Activated B cell treated with CpG ODN at 0.5 μM for 24 hours (primary cell): ENCODE measurements at regions of chr13 and their contacts with region 1.

Region 1: DNA sequence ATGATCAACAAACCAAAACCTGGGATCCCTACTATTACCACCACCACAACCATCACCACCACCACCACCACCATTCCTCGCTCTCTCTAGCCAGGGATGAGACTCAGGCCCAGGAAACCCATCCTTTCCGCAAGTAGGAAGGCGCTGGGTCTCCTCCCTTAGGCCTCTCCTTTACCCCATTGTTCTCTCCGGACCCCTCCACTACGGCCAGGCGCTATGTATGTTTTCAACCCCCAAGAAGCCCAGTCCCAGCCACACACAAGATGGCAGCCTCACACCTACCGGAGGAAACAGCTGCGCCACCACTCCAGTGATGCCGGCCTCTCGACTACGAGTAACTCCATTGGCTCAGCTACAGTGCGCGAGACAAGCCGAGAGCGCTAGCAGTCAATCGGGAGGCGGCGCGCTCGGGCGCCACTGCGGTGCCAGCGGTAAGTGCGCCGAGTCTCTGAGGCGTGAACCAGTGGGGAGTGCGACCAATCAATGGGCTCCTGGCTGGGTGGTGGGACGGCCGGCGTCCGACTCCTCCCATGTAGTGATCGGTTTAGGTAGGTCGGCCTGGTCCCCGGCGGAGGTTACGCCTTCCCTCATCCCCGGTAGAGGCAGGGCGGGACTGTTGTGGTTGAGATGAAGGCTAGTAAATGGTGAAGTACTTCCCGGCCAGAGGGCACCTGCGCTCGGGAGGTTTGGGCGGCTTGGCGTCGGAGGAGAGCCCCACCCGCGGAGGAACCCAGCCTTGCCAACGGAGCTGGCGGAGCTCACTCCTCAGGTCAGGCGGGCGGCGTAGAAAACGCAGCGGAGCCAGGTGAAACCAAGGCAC is at the starts of genes CAB39L and SETDB2:
- DNase-seq: peak; percentile 94
- ATAC-seq: peak; percentile 91
- H3K4me3 Mint-ChIP-seq: peak within 1 kb of the TSS; percentile 94
- H3K27ac Mint-ChIP-seq: peak within 1 kb of the TSS; percentile 99
- H3K4me1 Mint-ChIP-seq: peaks cover 72% of the 10 kb centered on the region
- H3K27me3 Mint-ChIP-seq: no peaks in the 10 kb centered on the region
- CTCF ChIP-seq: no peak
- total RNA-seq, gene CAB39L: 3.4 and 4.0 TPM in 2 replicates
- total RNA-seq, gene SETDB2: 23.6 and 25.1 TPM in 2 replicates

Region 2: DNA sequence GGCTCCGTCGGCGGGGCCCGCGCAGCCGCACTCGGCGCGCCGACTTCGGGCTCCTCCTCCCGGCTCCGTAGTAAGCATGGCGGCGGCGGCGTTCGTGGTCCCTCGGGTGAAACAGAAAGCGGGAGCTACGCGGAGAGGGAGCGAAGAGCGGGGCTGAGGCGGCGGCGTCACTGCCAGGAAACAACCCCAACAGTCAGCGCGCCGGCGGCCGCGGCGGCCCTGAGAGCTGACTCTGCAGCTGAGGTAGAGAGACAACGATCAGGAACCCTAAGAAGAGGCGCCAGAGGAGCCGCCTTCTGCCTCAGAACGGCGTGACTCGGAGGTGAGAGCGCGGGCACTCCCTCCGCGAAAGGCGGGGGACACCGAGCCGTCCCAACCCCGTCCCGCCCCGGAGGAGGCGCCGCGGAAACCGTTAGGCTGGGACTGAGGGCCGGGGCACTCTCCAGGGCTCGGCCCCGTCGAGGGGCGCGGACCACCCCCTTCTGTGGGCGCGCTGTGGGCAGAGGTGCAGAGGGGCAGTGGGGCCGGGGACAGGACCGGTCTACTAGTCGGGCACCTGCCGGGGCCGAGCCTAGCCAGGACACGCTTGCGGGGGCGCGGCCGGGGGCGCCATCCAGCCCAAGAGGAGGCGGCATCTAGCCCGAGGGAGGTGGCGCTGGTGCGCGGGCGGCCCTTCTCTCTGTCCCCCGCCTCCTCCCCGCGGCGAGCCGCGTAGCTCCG is 467.9 kb before region 1 on chr13 and contains the start of gene FNDC3A:
- CTCF ChIA-PET with region 1: no interaction called
- POLR2A ChIA-PET with region 1: interaction called, 7 read pairs
- intact Hi-C with region 1: loop called (anchors 1 kb)
- DNase-seq: peak; percentile 82
- ATAC-seq: peak; percentile 77
- H3K4me3 Mint-ChIP-seq: peak within 1 kb of the TSS; percentile 95
- H3K27ac Mint-ChIP-seq: peak within 1 kb of the TSS; percentile 98
- H3K4me1 Mint-ChIP-seq: peaks cover 47% of the 10 kb centered on the region
- H3K27me3 Mint-ChIP-seq: no peaks in the 10 kb centered on the region
- CTCF ChIP-seq: no peak
- total RNA-seq, gene FNDC3A: 30.3 and 34.1 TPM in 2 replicates

Region 3: DNA sequence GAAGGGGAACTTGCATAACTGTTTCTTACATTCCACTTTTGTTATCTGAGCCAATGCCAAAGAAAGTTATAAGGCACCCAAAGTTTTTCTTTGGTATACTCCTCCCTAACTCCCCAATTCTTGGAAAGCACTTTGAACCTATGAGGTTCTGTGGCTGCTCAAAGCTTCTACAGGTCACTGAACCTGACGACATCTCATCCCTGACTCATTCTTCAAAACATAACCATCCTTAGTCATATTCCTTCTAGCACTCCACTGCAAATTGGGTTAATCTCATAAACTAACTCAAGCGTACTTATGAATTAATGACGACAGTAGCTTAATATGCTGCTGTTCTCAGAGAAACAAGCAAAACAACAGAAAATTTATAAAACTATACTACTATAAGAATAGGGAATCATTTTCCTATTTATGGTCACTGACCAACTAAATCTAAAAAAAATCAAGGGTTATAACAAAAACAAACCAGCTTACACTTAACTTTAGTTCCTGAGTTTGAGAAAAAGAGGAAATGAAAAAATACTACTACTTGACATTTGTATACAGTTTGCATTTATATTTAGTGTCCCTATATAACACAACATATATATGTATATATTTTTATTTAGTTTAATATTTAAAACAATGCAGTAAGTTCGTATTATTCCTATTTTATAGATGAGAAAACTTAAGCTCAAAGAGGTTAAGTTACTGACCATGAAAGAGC is 69.2 kb before region 1 on chr13:
- CTCF ChIA-PET with region 1: no interaction called
- POLR2A ChIA-PET with region 1: interaction called, 12 read pairs
- intact Hi-C with region 1: no loop called
- DNase-seq: no peak
- ATAC-seq: peak; percentile 64
- H3K4me3 Mint-ChIP-seq: peak overlapping the region; percentile 30
- H3K27ac Mint-ChIP-seq: peak overlapping the region; percentile 36
- H3K4me1 Mint-ChIP-seq: peaks cover 52% of the 10 kb centered on the region
- H3K27me3 Mint-ChIP-seq: no peaks in the 10 kb centered on the region
- CTCF ChIP-seq: no peak

Region 4: GRCh38 chr13:49530457-49530856 is 86.5 kb after region 1 on chr13:
- CTCF ChIA-PET with region 1: no interaction called
- POLR2A ChIA-PET with region 1: interaction called, 11 read pairs
- intact Hi-C with region 1: loop called (anchors 1 kb)
- DNase-seq: peak; percentile 30
- ATAC-seq: peak; percentile 88
- H3K4me3 Mint-ChIP-seq: peak overlapping the region; percentile 67
- H3K27ac Mint-ChIP-seq: peak overlapping the region; percentile 89
- H3K4me1 Mint-ChIP-seq: peaks cover 73% of the 10 kb centered on the region
- H3K27me3 Mint-ChIP-seq: no peaks in the 10 kb centered on the region
- CTCF ChIP-seq: no peak

Region 5: DNA sequence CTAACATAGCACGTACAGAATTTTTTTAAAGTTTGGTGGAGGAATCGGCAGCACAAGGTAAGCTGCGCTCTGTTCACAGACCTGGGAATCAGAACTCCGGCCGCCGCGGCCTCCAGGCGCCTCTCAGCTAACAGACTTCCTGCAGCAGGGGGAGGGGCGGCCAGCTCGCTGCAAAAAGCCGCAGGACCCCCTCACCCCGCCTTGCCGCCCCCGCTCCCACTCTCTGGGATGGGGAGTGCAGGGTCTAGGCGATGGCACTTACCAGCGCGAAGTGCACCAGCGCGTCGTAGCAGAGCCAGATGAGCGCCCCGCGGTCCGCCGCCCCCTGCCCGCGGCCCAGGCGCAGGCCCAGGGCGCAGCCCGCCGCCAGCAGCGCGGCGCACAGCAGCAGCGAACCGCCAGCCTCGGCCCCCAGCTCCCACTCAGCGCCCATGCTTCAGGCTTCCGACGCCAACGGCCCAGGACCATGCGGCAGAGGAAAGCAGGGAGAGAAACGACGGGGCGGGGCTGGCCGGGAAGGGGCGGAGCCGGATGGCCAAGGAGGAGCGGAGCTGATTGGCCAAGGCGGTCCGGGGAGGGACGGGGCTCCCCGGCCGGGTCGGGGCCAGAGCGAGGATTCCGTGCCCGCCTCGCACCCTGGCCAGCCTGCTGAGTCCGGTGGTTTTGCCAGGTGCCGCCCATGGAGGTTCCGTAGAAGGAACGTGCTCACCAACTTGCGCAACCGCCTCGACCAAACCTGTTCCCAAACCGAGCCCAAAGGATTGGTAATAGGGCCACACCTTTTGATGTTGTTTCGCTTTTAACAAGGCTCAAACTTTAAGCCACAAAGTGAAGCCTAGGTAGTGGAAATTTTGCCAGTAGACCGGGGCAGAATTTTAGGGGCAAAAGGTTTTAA is 247.3 kb after region 1 on chr13 and contains the start of gene EBPL:
- CTCF ChIA-PET with region 1: no interaction called
- POLR2A ChIA-PET with region 1: interaction called, 7 read pairs
- intact Hi-C with region 1: loop called (anchors 2 kb)
- DNase-seq: peak; percentile 85
- ATAC-seq: peak; percentile 96
- H3K4me3 Mint-ChIP-seq: peak within 1 kb of the TSS; percentile 89
- H3K27ac Mint-ChIP-seq: peak within 1 kb of the TSS; percentile 79
- H3K4me1 Mint-ChIP-seq: peaks cover 27% of the 10 kb centered on the region
- H3K27me3 Mint-ChIP-seq: no peaks in the 10 kb centered on the region
- CTCF ChIP-seq: no peak
- total RNA-seq, gene EBPL: 20.0 and 22.4 TPM in 2 replicates